Right ventricle myocardium inferior (tissue), 1 donor: ENCODE measurements at regions of chr6 and their contacts with region 1.

Region 1: GRCh38 chr6:2848851-2849250 is 7.2 kb upstream of the SERPINB1 start:
- DNase-seq: no peak
- ATAC-seq: no peak

Region 2: GRCh38 chr6:2862712-2863181 is 13.9 kb after region 1 on chr6:
- intact Hi-C with region 1: no loop called
- DNase-seq: no peak
- ATAC-seq: no peak

Region 3: GRCh38 chr6:2891768-2892170 is 42.9 kb after region 1 on chr6:
- intact Hi-C with region 1: no loop called
- DNase-seq: no peak
- ATAC-seq: no peak

Region 4: GRCh38 chr6:2911171-2911570 is 62.3 kb after region 1 on chr6:
- intact Hi-C with region 1: loop called (anchors 5 kb)
- DNase-seq: no peak
- ATAC-seq: no peak

Region 5: DNA sequence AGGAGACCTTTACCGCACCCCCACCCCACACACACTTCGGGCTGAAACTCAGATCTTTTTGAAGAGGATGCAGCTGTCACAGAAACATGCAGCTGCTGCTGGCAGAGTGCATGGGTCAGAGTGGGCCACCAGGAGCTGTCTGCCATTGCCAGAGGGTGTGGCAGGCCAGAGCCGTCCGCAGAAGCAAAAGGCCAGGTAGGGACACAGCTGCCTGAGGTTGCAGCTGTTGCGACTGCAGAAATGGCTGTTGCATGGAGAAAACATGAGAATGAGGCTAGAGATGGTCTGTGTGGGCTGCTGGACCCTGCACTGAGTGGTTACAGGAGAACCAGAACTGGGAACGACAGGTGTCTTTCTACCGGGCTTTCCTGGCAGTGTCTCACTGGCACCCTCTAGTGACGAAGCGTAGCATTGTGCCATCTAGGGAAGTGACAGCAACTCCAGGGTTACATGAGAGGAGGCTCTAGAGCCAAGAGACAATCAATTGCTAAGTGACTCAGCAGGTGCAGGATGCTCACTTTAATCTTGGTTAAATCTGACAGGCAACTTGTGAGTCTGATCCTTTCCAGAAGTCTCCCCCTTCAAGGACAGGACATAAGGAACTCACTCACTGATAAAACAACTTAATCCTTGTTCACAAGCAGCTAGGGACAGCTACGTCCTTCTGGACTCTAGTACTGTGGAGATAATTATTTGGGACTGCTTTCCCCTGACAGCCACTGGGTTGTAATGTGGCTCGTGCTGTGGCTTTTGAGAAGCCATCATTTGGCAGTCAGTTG is 83.3 kb after region 1 on chr6:
- intact Hi-C with region 1: loop called (anchors 1 kb)
- DNase-seq: no peak
- ATAC-seq: peak; percentile 96